ENCODE measurements at regions of chr12 and their contacts with region 1.

Region 1: GRCh38 chr12:130041983-130042812 is 120.1 kb upstream of the FZD10 start:
- DNase-seq: peak; percentile 59
- ATAC-seq: no peak

Region 2: DNA sequence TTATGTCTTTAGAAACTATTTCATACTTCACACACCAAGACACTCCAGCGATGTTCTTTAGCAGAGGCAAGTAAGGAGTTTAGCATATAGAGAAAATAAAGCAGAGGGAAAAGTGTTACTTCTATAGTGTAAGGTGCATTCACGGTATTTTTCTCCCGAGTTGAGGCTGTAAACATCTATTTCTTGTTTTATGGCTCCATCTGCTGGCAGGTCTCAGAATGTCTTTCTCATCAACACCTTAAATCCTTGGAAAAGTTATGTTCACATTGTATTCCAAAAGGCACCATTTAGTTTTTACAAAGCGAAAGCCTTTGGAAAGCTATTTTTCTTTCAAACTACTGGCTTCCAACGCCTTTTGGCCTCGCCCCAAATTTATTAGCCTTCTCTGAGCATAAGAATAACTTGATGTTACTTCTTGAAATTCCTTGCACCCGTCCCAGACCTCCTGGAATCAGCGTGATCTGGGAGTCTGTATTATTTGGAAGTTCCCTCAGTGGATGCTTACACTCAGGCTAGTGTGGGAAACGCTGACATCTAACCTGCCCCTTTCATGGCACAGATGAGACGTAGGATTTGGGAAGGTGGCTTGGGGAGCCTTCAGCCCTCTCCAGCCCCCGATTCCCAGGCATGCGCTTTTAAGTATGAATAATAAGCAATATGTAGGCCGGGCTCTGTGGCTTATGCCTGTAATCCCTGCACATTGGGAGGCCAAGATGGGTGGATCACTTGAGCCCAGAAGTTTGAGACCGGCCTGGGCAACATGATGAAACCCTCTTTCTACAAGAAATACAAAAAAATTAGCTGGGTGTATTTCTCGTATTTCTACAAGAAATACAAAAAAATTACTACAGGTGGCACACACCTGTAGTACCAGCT is 293.6 kb after region 1 on chr12:
- intact Hi-C with region 1: loop called (anchors 1 kb)
- DNase-seq: no peak
- ATAC-seq: no peak